ENCODE measurements at regions of chr9 and their contacts with region 1.

Region 1: DNA sequence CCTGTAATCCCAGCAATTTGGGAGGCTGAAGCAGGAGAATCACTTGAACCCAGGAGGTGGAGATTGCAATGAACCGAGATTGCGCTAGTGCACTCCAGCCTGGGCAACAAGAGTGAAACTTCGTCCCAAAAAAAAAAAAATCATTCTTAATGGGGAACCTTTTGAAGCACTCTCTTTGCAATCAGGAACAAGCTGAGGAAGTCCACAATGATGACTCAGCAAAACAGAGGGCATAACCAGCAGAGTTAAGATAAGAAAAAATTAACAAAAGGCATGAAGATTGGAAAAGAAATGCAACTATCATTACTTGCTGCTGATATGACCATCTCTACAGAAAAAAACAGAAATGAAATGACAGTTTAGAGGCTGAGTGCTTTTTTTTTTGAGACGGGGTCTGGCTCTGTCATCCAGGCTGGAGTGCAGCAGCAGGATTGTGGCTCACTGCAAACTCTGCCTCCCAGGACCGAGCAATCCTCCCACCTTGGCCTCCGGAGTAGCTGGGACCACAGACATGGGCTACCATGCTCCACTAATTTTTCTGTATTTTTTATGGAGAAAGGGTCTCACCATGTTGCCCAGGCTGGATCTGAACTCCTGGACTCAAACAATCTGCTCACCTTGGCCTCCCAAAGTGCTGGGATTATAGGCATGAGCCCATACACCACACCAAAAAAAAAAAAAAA is 88.0 kb downstream of the FNBP1 start:
- DNase-seq: no peak
- H3K4me3 ChIP-seq: no peak overlapping the region
- H3K27ac ChIP-seq: peak overlapping the region; percentile 41 to 60 (median 56)
- H3K4me1 ChIP-seq: peaks cover 0 to 30% (median 2%) of the 10 kb centered on the region in 4 donors
- H3K27me3 ChIP-seq: no peaks in the 10 kb centered on the region
- CTCF ChIP-seq: no peak
- EP300 ChIP-seq: no peak
- POLR2A ChIP-seq: no peak

Region 2: DNA sequence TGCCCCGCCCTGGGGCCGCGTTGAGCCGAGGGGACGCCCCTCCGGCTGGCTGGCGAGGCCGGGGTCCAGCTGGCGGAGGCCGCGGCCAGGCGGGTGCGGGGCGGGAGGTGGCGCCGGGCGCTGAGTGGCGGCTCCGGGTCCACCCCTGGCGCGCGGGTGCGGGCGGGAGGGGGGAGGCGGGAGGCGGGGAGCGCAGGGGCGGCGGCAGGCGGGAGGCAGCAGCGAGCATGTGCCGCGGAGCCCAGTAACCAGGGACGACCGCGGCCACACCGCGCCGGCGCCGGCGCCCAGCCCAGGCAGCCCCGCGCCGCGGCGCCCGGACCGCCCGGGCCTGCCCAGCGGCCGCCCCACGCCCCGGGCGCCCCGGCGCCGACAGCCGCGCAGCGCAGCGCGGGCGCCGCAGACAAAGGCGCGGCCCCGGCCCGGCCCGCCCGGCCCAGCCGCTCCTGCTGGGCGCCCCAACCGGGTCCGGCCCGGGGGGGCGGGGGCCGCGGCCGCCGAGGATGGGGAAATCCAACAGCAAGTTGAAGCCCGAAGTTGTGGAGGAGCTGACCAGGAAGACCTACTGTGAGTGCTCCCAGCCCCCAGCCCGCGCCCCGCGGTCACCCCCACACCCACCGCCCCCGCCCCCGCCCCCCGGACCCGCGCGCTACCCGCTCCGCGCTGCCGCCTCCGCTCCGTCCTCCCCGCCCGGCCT is 217.3 kb after region 1 on chr9 and contains the start of gene NCS1:
- in situ Hi-C with region 1: no loop called
- intact Hi-C with region 1: loop called (anchors 5 kb)
- DNase-seq: peak; percentile 74
- H3K4me3 ChIP-seq: peak within 1 kb of the TSS; percentile 26 to 71 (median 51)
- H3K27ac ChIP-seq: peak within 1 kb of the TSS; percentile 80 to 87 (median 84)
- H3K4me1 ChIP-seq: peaks cover 0 to 30% (median 18%) of the 10 kb centered on the region in 4 donors
- H3K27me3 ChIP-seq: peaks cover 31% of the 10 kb centered on the region
- CTCF ChIP-seq: no peak
- EP300 ChIP-seq: no peak
- POLR2A ChIP-seq: no peak
- total RNA-seq, gene NCS1: 11.9 to 66.5 (median 25.9) TPM